IMR-90 (cell line): ENCODE measurements at regions of chr7 and their contacts with region 1.

Region 1: GRCh38 chr7:77258014-77258413 is 58.4 kb upstream of the FGL2 start:
- DNase-seq: peak; percentile 78
- ATAC-seq: peak; percentile 55
- H3K4me3 ChIP-seq: no peak overlapping the region
- H3K27ac ChIP-seq: peak overlapping the region; percentile 10; the same call in 1 of the 2 replicates
- H3K4me1 ChIP-seq: peaks cover 23% of the 10 kb centered on the region
- H3K27me3 ChIP-seq: no peaks in the 10 kb centered on the region
- CTCF ChIP-seq: no peak
- POLR2A ChIP-seq: no peak
- RAD21 ChIP-seq: no peak

Region 2: DNA sequence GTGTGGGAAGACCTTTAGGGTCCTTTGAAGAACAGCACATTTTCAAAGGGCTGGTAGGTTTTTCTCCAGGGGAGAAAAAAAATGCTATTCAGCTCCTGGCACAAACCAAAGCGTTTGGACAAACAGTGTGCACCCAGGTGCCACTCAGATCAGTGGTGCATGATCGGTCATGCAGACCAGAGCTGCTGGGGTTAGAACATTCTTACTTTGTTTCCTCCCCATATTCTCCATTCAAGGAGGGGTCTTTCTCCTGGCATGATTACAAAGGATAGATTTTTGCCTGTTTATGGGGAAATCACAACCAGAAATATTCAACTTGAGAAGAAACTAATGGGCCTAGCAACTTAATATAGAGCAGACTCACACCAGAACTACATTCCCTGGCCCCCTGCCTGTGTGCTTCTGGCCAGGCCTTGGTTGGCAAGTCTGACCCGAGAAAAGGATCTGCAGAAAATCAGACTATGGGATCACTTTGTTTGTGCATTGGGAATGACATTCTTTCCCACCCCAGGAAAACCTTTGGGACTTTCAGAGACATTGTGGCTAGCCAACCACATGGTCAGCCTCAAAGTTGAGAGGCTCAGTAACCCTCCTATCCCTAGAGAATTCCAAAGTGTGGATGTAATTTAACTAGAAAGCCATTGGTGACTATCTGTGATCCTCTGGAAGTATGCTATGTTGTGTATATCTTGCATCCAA is 23.9 kb after region 1 on chr7:
- CTCF ChIA-PET with region 1: no interaction called
- POLR2A ChIA-PET with region 1: interaction called, 23 read pairs
- dilution Hi-C with region 1: no loop called
- in situ Hi-C with region 1: no loop called
- intact Hi-C with region 1: no loop called
- DNase-seq: no peak
- ATAC-seq: no peak
- H3K4me3 ChIP-seq: no peak overlapping the region
- H3K27ac ChIP-seq: no peak overlapping the region
- H3K4me1 ChIP-seq: peaks cover 1% of the 10 kb centered on the region; the same call in 1 of the 2 replicates
- H3K27me3 ChIP-seq: no peaks in the 10 kb centered on the region
- CTCF ChIP-seq: no peak
- POLR2A ChIP-seq: no peak
- RAD21 ChIP-seq: no peak

Region 3: GRCh38 chr7:77425101-77426051 is 167.4 kb after region 1 on chr7:
- CTCF ChIA-PET with region 1: no interaction called
- POLR2A ChIA-PET with region 1: no interaction called
- dilution Hi-C with region 1: no loop called
- in situ Hi-C with region 1: no loop called
- intact Hi-C with region 1: no loop called
- DNase-seq: peak; percentile 91
- ATAC-seq: peak; percentile 82
- H3K4me3 ChIP-seq: peak overlapping the region; percentile 38
- H3K27ac ChIP-seq: peak overlapping the region; percentile 38
- H3K4me1 ChIP-seq: peaks cover 16% of the 10 kb centered on the region
- H3K27me3 ChIP-seq: no peaks in the 10 kb centered on the region
- CTCF ChIP-seq: 0 out of 2 replicates have a peak, but pooled peaks have one; percentile 4
- POLR2A ChIP-seq: no peak
- RAD21 ChIP-seq: no peak